AG04450 (cell line): ENCODE measurements at regions of chr13 and their contacts with region 1.

Region 1: DNA sequence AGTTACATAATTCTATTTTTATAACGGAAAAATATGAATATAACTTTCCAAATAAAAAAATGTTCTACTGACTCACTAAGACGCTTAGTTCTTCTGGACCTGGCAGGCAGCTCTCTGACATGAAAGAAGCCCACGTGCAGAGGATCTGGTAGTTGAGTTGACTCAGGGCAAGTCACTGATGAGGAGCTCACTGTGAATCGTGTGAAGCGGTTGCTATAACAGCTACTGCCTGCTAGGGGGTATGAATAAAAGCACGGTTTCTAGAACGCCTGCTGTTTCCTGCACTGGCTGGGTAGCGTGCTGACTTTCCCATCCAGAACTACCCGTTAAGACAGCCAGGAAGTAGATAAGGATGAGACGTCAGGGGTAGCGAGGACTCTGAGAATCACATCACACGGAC is 54.7 kb upstream of the WASF3 start:
- DNase-seq: peak; percentile 24
- H3K4me3 ChIP-seq: no peak overlapping the region
- H3K27ac ChIP-seq: no peak overlapping the region
- H3K27me3 ChIP-seq: no peaks in the 10 kb centered on the region
- CTCF ChIP-seq: peak; percentile 44

Region 2: GRCh38 chr13:25958986-25959385 is 543.8 kb before region 1 on chr13:
- CTCF ChIA-PET with region 1: no interaction called
- POLR2A ChIA-PET with region 1: no interaction called
- DNase-seq: no peak
- H3K4me3 ChIP-seq: no peak overlapping the region
- H3K27ac ChIP-seq: no peak overlapping the region
- H3K27me3 ChIP-seq: no peaks in the 10 kb centered on the region
- CTCF ChIP-seq: no peak

Region 3: GRCh38 chr13:26202365-26202972 is 300.4 kb before region 1 on chr13:
- CTCF ChIA-PET with region 1: interaction called, 12 read pairs
- POLR2A ChIA-PET with region 1: no interaction called
- DNase-seq: no peak
- H3K4me3 ChIP-seq: no peak overlapping the region
- H3K27ac ChIP-seq: no peak overlapping the region
- H3K27me3 ChIP-seq: no peaks in the 10 kb centered on the region
- CTCF ChIP-seq: no peak

Region 4: DNA sequence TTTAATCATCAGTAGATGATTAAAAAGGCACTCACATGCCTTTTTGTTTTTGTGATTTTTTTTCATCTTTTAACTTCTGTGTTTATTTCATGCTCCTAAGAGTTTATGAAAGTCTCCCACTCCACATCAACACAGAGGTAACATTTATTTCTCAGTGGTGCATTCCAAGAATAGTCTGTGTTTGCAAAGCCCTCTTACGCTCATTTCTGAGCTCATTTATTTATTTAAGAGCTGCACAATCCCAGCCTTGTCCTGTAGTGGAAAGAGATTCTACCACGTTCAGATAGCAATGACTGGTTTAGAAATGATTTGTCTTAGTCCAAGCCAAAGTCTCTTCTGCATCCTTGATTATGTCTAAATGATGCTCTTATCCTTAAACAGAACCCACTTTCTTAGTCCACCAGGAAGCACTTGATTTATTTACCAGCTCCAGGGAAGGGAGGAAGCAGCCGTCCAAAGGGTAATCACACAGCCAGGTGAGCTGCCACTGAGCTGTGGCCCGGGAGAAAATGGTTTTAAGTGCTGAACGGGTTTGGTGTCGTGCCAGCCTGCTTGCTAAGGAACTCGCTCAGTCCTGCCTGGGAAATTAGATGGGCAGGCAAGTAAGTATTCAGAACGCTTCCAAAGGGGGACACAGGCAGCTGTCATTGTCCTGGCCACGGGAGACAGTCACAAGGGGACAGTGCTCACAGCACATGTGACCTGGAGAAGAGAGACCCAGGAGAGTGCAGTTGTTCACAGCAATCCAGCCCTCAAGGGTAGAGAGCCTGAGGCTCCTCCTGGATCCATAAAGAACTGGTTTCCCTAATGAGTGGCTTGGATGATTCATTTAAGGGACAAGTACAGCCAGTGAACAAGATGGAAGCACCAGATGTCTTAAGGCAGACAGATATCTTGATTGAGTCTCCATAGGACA is 77.1 kb before region 1 on chr13:
- CTCF ChIA-PET with region 1: no interaction called
- POLR2A ChIA-PET with region 1: no interaction called
- DNase-seq: peak; percentile 37
- H3K4me3 ChIP-seq: no peak overlapping the region
- H3K27ac ChIP-seq: peak overlapping the region; percentile 34
- H3K27me3 ChIP-seq: no peaks in the 10 kb centered on the region
- CTCF ChIP-seq: no peak

Region 5: DNA sequence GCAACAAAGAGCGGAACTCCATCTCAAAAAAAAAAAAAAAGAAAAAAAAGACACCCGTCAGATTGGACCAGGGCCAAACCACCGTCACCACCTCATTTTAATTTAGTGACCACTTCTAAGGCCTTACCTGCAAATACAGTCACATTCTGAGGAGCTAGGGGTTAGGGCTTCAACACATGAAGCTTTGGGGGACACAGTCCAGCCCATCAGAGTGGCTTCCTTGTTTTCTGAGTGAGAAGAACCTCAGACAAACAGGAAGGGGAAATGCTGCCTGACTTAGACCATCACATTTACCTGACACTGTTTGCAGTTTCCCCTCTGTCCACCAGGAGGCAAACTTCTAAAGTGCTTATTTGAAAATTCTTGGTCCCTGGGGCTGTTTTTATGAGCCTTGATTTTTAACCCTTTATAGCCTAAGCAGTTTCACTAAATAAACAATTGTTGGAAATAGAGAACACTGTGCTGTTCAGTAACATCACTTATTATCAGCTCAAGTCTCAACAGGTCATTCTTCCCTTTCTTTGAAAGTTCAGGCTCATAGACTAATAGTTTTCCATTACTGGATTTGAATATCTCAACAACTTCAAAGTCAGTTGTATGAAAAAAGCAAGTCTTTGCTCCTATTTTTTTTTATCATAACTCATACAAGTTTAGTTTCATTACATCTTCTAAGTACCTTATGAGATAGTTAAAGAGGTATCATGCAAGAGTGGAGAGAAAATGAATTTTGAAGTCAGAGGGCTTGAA is 20.2 kb before region 1 on chr13:
- CTCF ChIA-PET with region 1: interaction called, 46 read pairs
- POLR2A ChIA-PET with region 1: no interaction called
- DNase-seq: no peak
- H3K4me3 ChIP-seq: no peak overlapping the region
- H3K27ac ChIP-seq: no peak overlapping the region
- H3K27me3 ChIP-seq: peaks cover 1% of the 10 kb centered on the region
- CTCF ChIP-seq: peak; percentile 96